ENCODE measurements at regions of chr3 and their contacts with region 1.

Region 1: GRCh38 chr3:52220380-52221026 is 4.9 kb downstream of the TLR9 start:
- DNase-seq: no peak
- H3K4me3 ChIP-seq: no peak overlapping the region
- H3K27ac ChIP-seq: no peak overlapping the region
- H3K27me3 ChIP-seq: no peaks in the 10 kb centered on the region
- CTCF ChIP-seq: peak; percentile 97

Region 2: DNA sequence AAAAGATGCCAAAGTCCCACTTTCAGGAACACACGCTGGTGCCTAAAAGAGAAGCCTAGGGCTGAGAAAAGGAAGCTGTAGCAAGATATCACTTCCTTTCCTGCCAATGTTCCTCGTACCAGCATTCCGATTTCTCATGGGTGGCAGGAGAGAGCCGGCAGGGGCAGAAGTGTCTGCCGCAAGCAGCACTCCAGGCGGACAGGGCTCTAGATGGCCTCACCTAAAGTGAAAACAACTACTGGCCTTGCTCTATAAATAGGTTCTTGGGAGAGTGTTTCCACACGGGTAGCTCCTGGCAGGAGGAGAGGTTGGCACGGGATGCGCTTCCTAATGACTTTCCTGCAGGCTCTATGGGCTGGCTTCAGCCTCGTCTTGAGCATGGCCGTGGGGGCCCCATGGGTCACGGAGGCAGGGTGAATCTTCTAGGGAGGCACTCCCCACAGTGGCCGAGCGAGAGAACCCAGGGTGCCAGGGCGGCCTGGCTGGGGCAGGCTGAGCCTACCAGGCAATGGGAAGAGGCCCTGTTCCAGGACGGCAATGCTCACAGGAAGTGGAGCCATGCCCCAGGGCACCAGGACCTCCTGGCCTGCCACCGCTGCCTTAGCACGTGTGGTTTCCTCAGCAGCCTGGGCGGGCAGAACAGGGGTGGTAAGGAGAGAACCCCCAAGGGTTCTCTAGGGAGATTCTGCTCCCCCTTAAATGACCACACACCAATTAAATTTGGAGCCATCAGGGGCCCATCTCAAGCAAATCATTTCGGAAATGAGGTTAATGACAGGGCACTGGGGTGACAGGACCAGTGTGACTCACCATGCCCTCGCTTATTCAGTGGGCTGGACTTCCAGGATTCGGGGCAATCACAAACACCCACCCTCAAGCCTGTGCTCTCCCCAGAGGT is 149.5 kb before region 1 on chr3:
- CTCF ChIA-PET with region 1: no interaction called
- POLR2A ChIA-PET with region 1: no interaction called
- DNase-seq: no peak
- H3K4me3 ChIP-seq: no peak overlapping the region
- H3K27ac ChIP-seq: no peak overlapping the region
- H3K27me3 ChIP-seq: no peaks in the 10 kb centered on the region
- CTCF ChIP-seq: no peak

Region 3: DNA sequence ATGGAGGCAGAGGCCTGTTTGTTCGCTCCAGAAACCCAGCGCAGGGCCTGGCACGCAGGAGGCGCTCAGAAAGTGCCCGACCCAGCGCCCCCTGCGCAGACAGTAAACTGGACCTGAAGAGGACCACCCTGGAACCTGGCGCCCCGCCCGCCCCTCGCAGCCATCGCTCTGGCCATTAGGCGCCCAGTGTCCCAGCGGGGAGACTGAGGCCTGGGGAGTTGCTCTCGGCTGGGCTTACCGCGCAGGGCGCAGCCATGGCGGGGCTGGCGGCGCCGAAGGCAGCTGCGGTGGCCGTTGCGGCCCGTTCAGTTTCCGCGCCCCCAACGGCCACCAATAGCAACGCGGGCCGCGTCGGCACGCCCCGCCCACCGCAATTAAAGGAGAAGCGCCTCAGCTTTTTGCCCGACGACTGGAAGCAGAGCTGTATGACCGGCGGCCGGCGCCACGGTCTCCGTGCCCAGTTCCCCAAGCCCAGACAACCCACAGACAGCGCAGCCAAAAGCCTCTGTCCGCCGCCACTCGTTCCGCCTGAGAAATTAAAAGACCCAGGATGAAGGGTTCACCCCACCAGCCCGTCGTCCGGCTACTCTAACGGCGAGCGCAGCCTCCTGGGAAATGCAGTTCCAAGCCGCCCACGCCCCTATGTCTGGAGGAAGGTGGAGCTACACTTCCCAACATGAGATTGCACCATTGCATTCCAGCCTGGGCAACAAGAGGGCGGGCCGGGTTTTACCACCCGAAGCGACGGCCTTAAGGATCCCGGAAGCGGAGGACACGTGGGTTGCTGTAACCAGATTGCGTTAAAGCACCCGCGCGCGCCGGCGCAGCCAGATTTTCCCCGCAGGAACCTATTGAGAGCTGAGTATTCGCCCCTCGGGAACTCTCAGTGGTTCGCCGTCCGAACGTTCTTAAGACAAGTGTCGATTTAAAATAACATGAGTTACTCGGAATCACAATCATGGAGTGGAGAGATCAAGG is 66.1 kb before region 1 on chr3 and contains the start of gene POC1A:
- CTCF ChIA-PET with region 1: interaction called, 8 read pairs
- POLR2A ChIA-PET with region 1: interaction called, 10 read pairs
- DNase-seq: peak; percentile 95
- H3K4me3 ChIP-seq: peak within 1 kb of the TSS; percentile 76
- H3K27ac ChIP-seq: peak within 1 kb of the TSS; percentile 69
- H3K27me3 ChIP-seq: no peaks in the 10 kb centered on the region
- CTCF ChIP-seq: no peak
- polyA plus RNA-seq, gene POC1A: 4.1 and 4.5 TPM in 2 replicates

Region 4: DNA sequence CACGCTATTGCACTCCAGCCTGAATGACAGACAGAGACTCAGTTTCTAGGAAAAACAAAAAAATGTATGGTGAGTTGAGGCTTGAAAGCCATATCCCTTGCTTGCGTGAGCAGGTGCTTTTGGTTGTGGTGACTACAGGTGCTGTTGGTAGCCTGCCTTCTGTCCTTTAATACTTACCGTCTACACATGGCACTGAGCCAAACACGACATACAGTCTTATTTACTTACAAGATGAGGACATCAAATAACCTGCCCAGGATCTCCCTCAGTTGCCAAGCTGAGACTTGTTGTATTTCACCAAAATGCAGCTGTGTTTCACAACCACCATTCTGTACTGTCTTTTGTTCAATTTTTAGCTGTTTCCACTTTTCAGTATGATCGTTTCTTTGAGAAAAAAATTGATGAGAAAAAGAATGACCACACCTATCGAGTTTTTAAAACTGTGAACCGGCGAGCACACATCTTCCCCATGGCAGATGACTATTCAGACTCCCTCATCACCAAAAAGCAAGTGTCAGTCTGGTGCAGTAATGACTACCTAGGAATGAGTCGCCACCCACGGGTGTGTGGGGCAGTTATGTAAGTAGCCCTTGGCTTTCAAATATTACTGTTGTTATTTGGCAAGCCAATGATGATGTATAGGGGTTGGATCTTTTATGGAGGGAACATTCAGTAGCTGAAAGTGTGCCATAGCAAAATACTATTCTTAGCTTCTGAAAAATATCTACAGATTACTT is 16.0 kb before region 1 on chr3:
- CTCF ChIA-PET with region 1: interaction called, 38 read pairs
- POLR2A ChIA-PET with region 1: interaction called, 6 read pairs
- DNase-seq: no peak
- H3K4me3 ChIP-seq: no peak overlapping the region
- H3K27ac ChIP-seq: no peak overlapping the region
- H3K27me3 ChIP-seq: no peaks in the 10 kb centered on the region
- CTCF ChIP-seq: no peak

Region 5: DNA sequence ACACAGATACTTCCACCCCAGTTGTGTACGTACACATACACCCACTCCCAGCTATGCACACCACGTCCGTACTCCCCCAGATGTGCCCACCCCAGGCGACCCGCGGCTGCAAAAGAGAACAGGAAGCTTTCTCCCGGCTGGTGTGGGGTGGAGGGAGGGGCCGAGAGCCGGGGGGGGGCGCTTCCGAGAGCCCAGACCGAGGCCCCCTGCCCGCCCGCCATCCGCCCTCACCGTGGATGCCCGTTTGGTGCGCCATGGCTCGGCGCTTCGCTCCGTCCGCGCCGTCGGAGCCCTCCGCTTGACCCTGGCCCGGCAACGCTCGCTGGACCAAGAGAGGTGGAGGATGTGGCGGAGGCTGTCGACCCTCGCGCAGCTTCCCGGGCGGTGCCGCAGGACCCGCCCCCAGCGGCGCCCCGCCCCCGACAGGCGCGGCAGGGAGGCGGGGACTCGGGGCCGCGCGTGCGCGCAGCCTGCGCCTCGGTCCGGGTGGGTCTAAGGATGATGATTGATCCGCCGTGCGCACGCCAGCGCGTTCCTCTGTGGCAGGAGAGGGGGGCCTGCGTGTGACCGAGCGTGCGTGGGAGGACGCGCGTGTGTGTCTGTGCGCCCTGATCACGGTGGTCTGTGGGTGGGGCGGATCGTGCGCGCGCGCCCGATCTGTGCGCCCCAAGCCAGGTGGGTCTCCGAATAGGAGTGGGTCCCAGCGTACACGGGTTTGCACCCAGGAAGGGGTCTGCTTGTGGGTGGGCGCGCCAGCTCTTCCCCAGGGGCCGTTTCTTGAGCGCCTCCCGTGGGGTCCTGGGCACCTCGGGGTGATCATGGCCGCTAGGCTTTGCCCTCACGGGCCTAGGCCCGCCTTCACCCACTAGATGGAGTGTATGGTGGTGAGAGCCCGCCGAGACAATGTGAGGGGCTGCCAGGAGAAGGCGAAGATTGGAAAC is 18.5 kb after region 1 on chr3 and contains the start of gene TWF2:
- CTCF ChIA-PET with region 1: interaction called, 52 read pairs
- POLR2A ChIA-PET with region 1: interaction called, 4 read pairs
- DNase-seq: peak; percentile 45
- H3K4me3 ChIP-seq: peak within 1 kb of the TSS; percentile 96
- H3K27ac ChIP-seq: peak within 1 kb of the TSS; percentile 99
- H3K27me3 ChIP-seq: no peaks in the 10 kb centered on the region
- CTCF ChIP-seq: peak; percentile 40
- polyA plus RNA-seq, gene TWF2: 96.6 and 128 TPM in 2 replicates

Region 6: DNA sequence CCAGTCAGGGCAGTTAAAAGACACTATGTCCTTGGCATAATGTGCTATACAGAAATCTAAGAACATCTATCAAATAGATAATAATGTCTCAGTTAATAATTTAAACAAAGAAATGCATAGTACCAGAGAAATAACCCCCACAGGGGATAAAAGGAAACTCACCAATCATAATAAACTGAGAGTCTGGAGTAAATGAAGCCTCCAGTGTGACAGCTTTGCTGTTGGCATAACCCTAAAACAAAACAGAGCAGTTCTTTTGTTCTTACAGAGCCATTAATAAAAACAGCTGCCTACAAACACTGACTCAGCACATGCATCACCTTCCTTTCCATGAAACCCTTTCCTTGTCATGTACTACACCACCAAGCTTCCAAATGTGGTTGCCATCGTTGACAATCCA is 38.5 kb after region 1 on chr3:
- CTCF ChIA-PET with region 1: interaction called, 10 read pairs
- POLR2A ChIA-PET with region 1: no interaction called
- DNase-seq: no peak
- H3K4me3 ChIP-seq: no peak overlapping the region
- H3K27ac ChIP-seq: no peak overlapping the region
- H3K27me3 ChIP-seq: no peaks in the 10 kb centered on the region
- CTCF ChIP-seq: no peak

Region 7: DNA sequence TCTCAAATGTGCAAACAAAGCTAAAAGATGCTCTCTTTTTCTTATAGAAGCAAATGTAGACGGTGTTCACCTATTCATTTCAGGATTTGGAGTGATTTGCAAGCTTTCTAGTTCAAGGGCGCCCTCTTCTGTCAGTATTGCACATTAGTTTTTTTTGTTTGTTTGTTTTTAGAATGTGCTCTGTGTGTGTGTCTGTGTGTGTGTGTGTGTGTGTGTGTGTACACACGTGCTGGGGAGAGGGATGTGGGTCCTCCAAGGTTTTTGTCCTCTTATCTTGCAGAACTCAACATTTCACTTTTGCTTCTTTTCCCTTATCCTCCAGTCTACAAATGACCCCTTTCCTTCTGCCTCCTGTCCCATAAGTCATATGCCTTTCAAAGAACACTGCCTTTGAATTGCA is 119.1 kb after region 1 on chr3:
- CTCF ChIA-PET with region 1: interaction called, 128 read pairs
- POLR2A ChIA-PET with region 1: interaction called, 3 read pairs
- DNase-seq: peak; percentile 71
- H3K4me3 ChIP-seq: no peak overlapping the region
- H3K27ac ChIP-seq: no peak overlapping the region
- H3K27me3 ChIP-seq: no peaks in the 10 kb centered on the region
- CTCF ChIP-seq: peak; percentile 70

Region 8: GRCh38 chr3:52385157-52385556 is 164.7 kb after region 1 on chr3:
- CTCF ChIA-PET with region 1: interaction called, 15 read pairs
- POLR2A ChIA-PET with region 1: no interaction called
- DNase-seq: no peak
- H3K4me3 ChIP-seq: no peak overlapping the region
- H3K27ac ChIP-seq: no peak overlapping the region
- H3K27me3 ChIP-seq: no peaks in the 10 kb centered on the region
- CTCF ChIP-seq: peak; percentile 63

Measured in AG04450 (cell line).